CD14-positive monocyte (primary cell): ENCODE measurements at regions of chr3 and their contacts with region 1.

Region 1: GRCh38 chr3:71583566-71584449 is at the start of gene FOXP1:
- DNase-seq: peak; percentile 67 to 87 (median 77)
- H3K4me3 ChIP-seq: peak within 1 kb of the TSS; percentile 91 to 99 (median 99)
- H3K4me3 Mint-ChIP-seq: peak within 1 kb of the TSS; percentile 95 to 96
- H3K27ac ChIP-seq: peak within 1 kb of the TSS; percentile 92 to 96
- H3K27ac Mint-ChIP-seq: peak within 1 kb of the TSS; percentile 92 to 99 (median 97)
- H3K4me1 ChIP-seq: peaks cover 26 to 42% of the 10 kb centered on the region in 2 donors
- H3K4me1 Mint-ChIP-seq: peaks cover 35% of the 10 kb centered on the region
- H3K27me3 ChIP-seq: no peaks in the 10 kb centered on the region
- H3K27me3 Mint-ChIP-seq: peaks cover 0 to 2% (median 0%) of the 10 kb centered on the region in 3 donors
- CTCF ChIP-seq: no peak
- polyA plus RNA-seq, gene FOXP1: 25.7 to 42.6 (median 27.8) TPM

Region 2: DNA sequence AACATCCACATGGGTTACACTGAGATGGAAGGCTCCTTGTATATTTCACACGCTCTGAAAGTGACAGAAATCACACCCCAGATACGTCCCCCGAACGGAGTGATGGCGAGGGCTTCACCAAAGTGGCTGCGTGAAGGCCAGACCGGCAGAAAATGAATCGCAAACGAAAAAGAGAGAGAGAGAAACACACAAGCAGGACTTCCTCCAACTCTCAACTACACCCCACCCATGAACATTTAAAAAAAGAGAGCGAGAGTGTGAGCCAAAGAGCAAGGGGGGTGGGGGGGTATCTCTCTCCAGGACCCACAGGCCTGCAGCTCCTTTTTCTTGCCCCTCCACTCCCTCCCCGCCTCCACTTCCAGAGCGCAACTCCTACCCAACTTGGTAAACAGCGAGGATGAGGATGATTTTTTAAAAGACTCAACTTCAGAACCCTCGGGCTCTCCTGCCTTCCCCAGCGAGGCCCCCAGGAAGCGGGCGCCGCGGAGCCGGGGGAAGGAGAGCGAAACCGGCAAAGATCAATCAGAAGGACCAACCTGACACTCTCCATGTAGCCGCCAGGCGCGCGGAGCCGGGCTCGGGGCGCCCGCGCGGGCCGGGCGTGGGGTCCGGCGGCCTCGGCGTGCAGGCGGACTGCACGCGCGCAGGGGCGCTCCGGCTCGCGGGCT is 519.4 kb before region 1 on chr3:
- intact Hi-C with region 1: loop called (anchors 5 to 10 kb)
- DNase-seq: peak; percentile 14 to 32 (median 26)
- H3K4me3 ChIP-seq: peak overlapping the region; percentile 70 to 90 (median 79)
- H3K4me3 Mint-ChIP-seq: no peak overlapping the region
- H3K27ac ChIP-seq: peak overlapping the region; percentile 65 to 83
- H3K27ac Mint-ChIP-seq: no peak overlapping the region
- H3K4me1 ChIP-seq: peaks cover 41 to 50% of the 10 kb centered on the region in 2 donors
- H3K4me1 Mint-ChIP-seq: peaks cover 29% of the 10 kb centered on the region
- H3K27me3 ChIP-seq: no peaks in the 10 kb centered on the region
- H3K27me3 Mint-ChIP-seq: peaks cover 0 to 6% (median 4%) of the 10 kb centered on the region in 3 donors
- CTCF ChIP-seq: no peak

Region 3: GRCh38 chr3:71305231-71306206 is 278.3 kb before region 1 on chr3:
- intact Hi-C with region 1: loop called in 1 of 2 experiments (anchors 10 kb)
- DNase-seq: no peak
- H3K4me3 ChIP-seq: peak overlapping the region in 1 of 3 experiments; percentile 27
- H3K4me3 Mint-ChIP-seq: peak overlapping the region; percentile 67 to 74
- H3K27ac ChIP-seq: peak overlapping the region in 1 of 2 donors; percentile 3
- H3K27ac Mint-ChIP-seq: peak overlapping the region in 4 of 7 donors; percentile 2 to 85 (median 70)
- H3K4me1 ChIP-seq: peaks cover 11 to 12% of the 10 kb centered on the region in 2 donors
- H3K4me1 Mint-ChIP-seq: peaks cover 42% of the 10 kb centered on the region
- H3K27me3 ChIP-seq: no peaks in the 10 kb centered on the region
- H3K27me3 Mint-ChIP-seq: peaks cover 0 to 4% (median 0%) of the 10 kb centered on the region in 3 donors
- CTCF ChIP-seq: no peak

Region 4: DNA sequence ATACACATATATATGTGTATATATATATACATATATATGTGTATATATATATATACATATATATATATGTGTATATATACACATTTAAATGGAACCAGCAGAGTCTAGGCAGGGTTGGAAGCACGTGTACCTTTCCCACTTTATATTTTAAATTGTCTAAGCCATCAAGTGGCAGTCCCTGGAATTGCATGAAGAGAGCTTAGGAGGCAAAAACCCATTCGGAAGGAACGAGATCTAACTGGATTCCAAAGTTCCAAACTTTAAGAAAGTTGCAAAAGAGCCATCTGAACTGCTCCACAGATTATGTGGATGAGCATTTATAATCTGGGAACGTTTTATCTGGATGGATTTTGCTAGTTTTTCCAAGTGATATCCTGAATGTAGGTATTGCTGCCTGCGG is 186.8 kb before region 1 on chr3:
- intact Hi-C with region 1: loop called (anchors 5 to 10 kb)
- DNase-seq: peak in 1 of 3 donors; percentile 23
- H3K4me3 ChIP-seq: no peak overlapping the region
- H3K4me3 Mint-ChIP-seq: no peak overlapping the region
- H3K27ac ChIP-seq: no peak overlapping the region
- H3K27ac Mint-ChIP-seq: no peak overlapping the region
- H3K4me1 ChIP-seq: peaks cover 31 to 36% of the 10 kb centered on the region in 2 donors
- H3K4me1 Mint-ChIP-seq: peaks cover 56% of the 10 kb centered on the region
- H3K27me3 ChIP-seq: no peaks in the 10 kb centered on the region
- H3K27me3 Mint-ChIP-seq: no peaks in the 10 kb centered on the region
- CTCF ChIP-seq: peak; percentile 68

Region 5: GRCh38 chr3:71504250-71505036 is 79.4 kb before region 1 on chr3:
- intact Hi-C with region 1: loop called in 1 of 2 experiments (anchors 5 kb)
- DNase-seq: peak; percentile 75 to 90 (median 88)
- H3K4me3 ChIP-seq: no peak overlapping the region
- H3K4me3 Mint-ChIP-seq: peak overlapping the region in 1 of 2 donors; percentile 47
- H3K27ac ChIP-seq: peak overlapping the region in 1 of 2 donors; percentile 76
- H3K27ac Mint-ChIP-seq: peak overlapping the region; percentile 78 to 93 (median 86)
- H3K4me1 ChIP-seq: peaks cover 16 to 27% of the 10 kb centered on the region in 2 donors
- H3K4me1 Mint-ChIP-seq: peaks cover 34% of the 10 kb centered on the region
- H3K27me3 ChIP-seq: no peaks in the 10 kb centered on the region
- H3K27me3 Mint-ChIP-seq: no peaks in the 10 kb centered on the region
- CTCF ChIP-seq: no peak

Region 6: GRCh38 chr3:71601811-71602210 is 18.0 kb after region 1 on chr3:
- intact Hi-C with region 1: no loop called
- DNase-seq: peak in 1 of 3 donors; percentile 36
- H3K4me3 ChIP-seq: no peak overlapping the region
- H3K4me3 Mint-ChIP-seq: no peak overlapping the region
- H3K27ac ChIP-seq: no peak overlapping the region
- H3K27ac Mint-ChIP-seq: no peak overlapping the region
- H3K4me1 ChIP-seq: no peaks in the 10 kb centered on the region
- H3K4me1 Mint-ChIP-seq: peaks cover 10% of the 10 kb centered on the region
- H3K27me3 ChIP-seq: no peaks in the 10 kb centered on the region
- H3K27me3 Mint-ChIP-seq: peaks cover 0 to 2% (median 0%) of the 10 kb centered on the region in 3 donors
- CTCF ChIP-seq: no peak

Region 7: GRCh38 chr3:71916745-71917369 is 333.0 kb after region 1 on chr3:
- intact Hi-C with region 1: no loop called
- DNase-seq: no peak
- H3K4me3 ChIP-seq: no peak overlapping the region
- H3K4me3 Mint-ChIP-seq: peak overlapping the region in 1 of 2 donors; percentile 52
- H3K27ac ChIP-seq: no peak overlapping the region
- H3K27ac Mint-ChIP-seq: peak overlapping the region in 1 of 7 donors; percentile 19
- H3K4me1 ChIP-seq: peaks cover 7 to 15% of the 10 kb centered on the region in 2 donors
- H3K4me1 Mint-ChIP-seq: peaks cover 19% of the 10 kb centered on the region
- H3K27me3 ChIP-seq: peaks cover 74 to 92% of the 10 kb centered on the region in 2 donors
- H3K27me3 Mint-ChIP-seq: peaks cover 78 to 90% (median 87%) of the 10 kb centered on the region in 3 donors
- CTCF ChIP-seq: no peak